Adrenal gland (tissue), 19 donors: ENCODE measurements at regions of chr3 and their contacts with region 1.

Region 1: DNA sequence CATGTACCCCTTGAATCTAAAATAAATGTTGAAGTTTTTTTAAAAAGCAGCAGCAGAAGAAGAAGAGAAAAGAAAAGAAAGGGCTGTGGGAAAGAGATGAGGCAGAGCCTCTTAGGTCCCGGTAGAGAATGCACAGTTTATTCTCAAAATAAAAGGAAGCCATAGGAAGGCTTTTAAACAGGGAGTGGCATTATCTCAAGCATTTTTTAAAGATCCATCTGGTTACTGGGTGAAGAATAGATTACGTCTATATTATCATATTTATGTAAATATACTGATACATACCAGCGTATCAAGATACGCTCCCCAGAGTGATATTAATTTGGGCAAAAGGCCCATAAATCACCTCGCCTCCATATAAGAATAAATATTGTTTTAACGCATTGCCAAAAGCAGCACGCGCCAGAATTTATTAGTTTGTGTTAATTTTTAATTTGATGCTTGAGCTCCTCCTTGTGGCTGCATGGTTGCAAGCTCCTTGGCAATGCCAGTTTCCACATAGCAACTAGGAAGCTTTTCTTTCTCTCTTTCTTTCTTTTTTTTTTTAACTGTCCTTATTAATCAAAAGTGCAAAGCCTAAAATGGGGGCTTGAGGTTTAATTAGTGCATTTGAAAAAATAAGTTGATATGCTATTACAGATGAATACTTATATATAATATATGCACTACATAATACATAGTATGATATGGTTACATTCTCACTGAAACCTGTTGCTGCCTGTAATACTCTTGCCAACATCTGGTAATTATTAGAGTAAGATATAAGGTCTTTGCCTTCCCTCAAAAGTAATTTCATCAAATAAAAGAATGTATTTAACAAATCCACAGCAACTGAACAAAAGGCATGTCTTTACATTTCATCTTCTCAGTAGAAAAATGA is 242.8 kb upstream of the UBE2E2 start:
- DNase-seq: peak; percentile 23 to 73 (median 36)
- H3K4me3 ChIP-seq: no peak overlapping the region
- H3K27ac ChIP-seq: no peak overlapping the region
- H3K4me1 ChIP-seq: peaks cover 0 to 4% of the 10 kb centered on the region in 2 donors
- H3K27me3 ChIP-seq: no peaks in the 10 kb centered on the region
- CTCF ChIP-seq: peak; percentile 48 to 80 (median 66)
- POLR2A ChIP-seq: no peak

Region 2: DNA sequence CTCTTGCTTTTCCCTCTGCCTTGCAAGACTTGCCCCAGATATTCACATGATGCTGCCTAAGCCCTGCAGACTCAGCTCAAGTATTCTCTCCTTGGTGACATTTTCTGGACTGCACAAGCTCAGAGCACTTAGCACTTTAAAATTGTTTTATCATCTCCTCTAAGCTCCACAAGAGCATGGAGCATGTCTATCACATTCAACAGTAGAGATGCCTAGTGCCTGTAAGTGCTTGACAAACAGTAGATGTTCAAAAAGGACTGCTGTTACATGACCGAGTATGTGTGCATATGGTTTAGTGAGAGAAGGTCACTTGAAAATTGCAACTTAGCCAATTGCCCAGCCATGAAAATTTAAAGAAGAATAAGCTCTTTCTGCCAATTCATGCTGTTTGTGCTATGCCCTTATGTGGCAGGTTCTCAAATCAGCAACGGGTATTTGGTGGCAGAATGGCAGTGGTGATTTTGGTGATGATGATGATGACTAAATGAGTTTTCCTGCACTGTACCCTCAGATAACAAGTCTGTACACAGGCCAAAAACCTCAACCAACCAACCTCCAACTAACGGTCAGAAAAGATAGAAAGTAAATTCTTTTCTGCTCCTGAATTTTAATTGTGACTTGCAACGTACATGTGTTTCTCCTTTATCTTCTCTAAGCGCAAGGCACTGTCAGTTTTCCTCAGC is 404.5 kb before region 1 on chr3:
- intact Hi-C with region 1: loop called (anchors 5 to 10 kb)
- DNase-seq: no peak
- H3K4me3 ChIP-seq: no peak overlapping the region
- H3K27ac ChIP-seq: no peak overlapping the region
- H3K4me1 ChIP-seq: no peaks in the 10 kb centered on the region
- H3K27me3 ChIP-seq: no peaks in the 10 kb centered on the region
- CTCF ChIP-seq: no peak
- POLR2A ChIP-seq: no peak

Region 3: DNA sequence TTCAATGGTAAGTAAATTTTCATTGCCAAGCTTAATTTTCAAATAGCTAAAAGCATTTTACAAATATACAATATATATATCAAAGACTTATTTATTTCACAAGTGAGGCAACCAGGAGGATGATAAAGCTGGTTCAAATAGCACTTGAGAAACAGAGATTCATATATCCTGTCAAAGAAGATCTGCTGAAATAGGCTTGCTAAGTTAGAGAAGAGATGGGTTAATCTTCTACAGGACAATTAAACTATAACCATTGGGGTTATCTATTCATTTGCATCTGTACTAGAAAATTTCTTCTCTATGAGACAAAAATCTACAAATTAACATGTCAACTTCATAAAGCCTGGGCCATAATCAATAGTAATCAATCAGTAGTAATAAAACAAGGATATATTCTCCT is 395.0 kb before region 1 on chr3:
- intact Hi-C with region 1: loop called (anchors 5 to 10 kb)
- DNase-seq: no peak
- H3K4me3 ChIP-seq: no peak overlapping the region
- H3K27ac ChIP-seq: no peak overlapping the region
- H3K4me1 ChIP-seq: no peaks in the 10 kb centered on the region
- H3K27me3 ChIP-seq: no peaks in the 10 kb centered on the region
- CTCF ChIP-seq: no peak
- POLR2A ChIP-seq: no peak

Region 4: DNA sequence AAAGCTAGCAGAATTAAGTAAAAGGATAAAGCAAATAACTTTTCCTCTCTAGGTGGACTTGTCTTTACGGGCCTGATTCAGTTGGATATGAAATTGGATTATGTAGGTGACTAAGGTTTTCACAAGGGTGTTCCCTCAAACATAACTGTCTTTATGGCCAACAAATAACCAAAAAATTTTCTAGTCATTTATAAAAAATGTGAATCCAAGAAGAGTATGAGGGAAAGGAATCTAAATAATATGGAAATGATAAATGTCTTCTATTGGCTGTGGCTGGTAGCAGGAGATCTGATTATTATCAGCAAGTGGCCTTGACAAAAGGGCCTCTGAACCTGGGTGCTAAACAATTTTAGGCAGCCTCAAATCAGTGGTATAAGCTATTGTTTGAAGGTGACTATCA is 351.2 kb before region 1 on chr3:
- intact Hi-C with region 1: no loop called
- DNase-seq: no peak
- H3K4me3 ChIP-seq: no peak overlapping the region
- H3K27ac ChIP-seq: no peak overlapping the region
- H3K4me1 ChIP-seq: no peaks in the 10 kb centered on the region
- H3K27me3 ChIP-seq: no peaks in the 10 kb centered on the region
- CTCF ChIP-seq: no peak
- POLR2A ChIP-seq: no peak

Region 5: DNA sequence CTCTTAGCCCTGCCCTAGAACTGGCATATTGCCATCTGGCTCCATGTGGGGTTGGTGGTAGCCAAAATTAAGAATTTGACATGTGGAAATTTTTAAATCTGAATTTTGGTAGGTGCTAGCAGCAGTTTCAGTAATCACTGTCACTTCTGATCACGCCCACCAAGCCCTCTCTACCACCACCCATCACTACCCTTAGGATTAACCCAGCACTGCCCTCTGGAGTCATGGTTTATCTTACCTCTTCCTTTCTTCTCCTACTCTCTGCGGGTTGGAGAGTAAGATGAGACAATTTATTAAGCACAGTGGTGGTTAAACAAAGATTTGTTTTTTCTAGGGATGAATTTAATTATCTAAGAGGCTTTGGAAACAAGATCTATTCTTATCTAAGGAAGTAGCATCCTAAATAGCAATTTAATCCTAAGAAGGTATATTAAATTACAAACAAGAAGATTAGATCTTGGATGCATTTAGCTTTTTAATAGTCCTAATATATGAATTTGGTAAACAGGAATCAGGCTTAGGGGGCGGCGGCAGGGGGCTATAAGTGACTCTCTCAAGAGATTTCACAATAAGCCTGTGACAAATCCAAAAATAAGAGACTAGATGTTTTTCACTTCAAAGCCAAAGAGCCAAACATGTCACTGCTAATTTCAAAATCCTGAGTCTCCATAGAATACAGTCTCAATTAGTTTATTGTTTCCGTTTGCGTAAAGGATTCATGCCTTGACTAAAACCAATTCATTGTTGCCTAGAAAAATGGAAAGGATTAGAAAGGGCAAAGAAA is 255.6 kb before region 1 on chr3:
- intact Hi-C with region 1: no loop called
- DNase-seq: no peak
- H3K4me3 ChIP-seq: no peak overlapping the region
- H3K27ac ChIP-seq: no peak overlapping the region
- H3K4me1 ChIP-seq: no peaks in the 10 kb centered on the region
- H3K27me3 ChIP-seq: no peaks in the 10 kb centered on the region
- CTCF ChIP-seq: no peak
- POLR2A ChIP-seq: no peak

Region 6: GRCh38 chr3:22835041-22835440 is 125.3 kb before region 1 on chr3:
- intact Hi-C with region 1: no loop called
- DNase-seq: no peak
- H3K4me3 ChIP-seq: no peak overlapping the region
- H3K27ac ChIP-seq: no peak overlapping the region
- H3K4me1 ChIP-seq: no peaks in the 10 kb centered on the region
- H3K27me3 ChIP-seq: no peaks in the 10 kb centered on the region
- CTCF ChIP-seq: no peak
- POLR2A ChIP-seq: no peak